ENCODE measurements at regions of chr7 and their contacts with region 1.

Region 1: DNA sequence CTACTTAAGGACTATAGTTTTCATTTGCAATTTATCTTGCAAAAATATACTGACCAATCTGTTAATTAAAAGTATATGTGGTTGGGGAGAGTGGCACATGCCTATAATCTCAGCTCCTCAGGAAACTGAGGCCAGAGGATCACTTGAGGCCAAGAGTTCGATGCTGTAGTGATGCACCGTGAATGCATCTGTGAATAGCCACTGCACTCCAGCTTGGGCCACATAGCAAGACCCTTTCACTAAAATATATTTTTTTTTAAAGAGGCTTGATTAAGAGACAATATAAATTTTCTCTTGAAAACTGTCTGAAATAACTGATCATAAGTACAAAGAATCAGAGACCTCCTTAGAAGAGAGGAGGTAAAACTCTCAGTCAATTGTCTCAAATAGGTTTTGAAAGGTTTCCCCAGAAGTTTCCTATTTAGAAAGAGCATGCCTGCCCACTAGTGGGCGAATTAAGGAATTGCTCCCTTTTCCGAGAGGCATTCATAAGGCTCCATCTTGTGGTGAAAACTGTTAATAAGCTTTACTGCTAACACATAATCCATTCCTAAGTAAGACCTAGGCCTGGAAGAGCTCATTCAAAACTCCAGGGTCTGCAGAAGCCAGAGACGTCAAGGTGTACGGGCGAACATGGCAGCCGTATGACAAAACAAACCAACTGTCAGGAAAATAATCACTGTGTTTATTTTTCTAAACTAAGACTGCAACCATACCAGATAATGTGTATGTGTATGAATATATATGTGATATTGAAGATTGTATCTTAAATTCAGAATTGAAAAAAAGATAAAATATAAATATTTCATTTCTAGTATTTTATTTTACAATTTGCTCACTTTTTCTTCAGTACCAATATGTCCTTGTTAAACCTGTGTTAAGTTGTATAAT is 6.8 kb upstream of the TAS2R40 start:
- DNase-seq: peak; percentile 67
- ATAC-seq: peak; percentile 82

Region 2: DNA sequence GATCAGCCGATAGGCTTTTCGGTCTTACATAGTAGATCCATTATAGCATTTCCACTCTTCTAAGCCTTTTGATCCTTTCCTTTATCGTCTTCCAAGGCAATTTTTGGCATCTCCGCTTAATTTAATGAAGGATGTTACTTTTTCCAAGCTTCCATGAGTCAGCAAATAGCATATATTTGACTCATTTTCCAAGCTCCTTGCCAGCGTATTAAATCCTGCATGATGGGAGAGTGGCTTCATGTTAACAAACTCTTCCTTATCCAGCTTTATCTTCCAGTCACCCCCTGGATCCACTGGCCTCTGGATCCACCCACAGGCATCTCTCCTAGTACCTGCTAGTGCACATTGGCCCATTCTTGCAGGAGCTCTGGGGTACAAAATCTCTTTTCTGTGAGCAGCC is 201.1 kb before region 1 on chr7:
- intact Hi-C with region 1: loop called (anchors 5 kb)
- DNase-seq: no peak
- ATAC-seq: peak; percentile 60

Region 3: DNA sequence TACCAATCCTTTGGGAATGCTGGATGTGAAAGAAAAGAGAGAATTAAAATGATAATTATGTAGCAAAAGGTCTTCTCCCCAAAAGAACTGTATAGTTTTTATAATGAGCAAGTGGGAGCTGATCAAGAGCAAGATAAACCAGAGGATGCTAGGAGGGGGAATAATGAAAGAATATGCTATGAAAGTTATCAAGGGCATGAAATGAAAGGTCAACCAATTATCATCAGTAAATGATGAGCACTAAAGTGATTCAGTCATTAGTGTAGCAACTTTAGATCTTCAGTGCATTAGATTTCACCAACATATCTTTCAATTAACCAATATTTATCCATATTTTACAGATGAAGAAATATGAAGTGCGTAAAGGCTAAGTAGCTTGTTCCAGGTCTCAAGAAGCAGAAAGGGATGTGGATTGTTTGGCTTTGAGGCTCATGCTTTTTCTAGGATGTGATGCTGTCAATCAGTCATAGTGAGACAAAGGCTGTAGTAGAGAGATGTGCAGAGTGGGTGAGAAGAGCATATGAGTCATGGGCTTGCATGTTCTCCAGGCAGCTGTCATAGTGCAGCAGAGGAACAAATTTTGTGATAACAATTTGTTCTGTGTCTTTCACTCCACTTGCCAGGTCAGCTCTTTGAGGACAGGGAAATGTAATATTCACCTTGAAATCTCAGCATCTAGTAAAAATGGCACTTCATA is 714.3 kb after region 1 on chr7:
- intact Hi-C with region 1: no loop called
- DNase-seq: no peak
- ATAC-seq: no peak

Measured in sciatic nerve (tissue), 2 donors.